Transverse colon (tissue), 4 donors: ENCODE measurements at regions of chr2 and their contacts with region 1.

Region 1: GRCh38 chr2:99066075-99066958 is 75.2 kb upstream of the C2orf15 start:
- DNase-seq: peak; percentile 38
- H3K4me3 ChIP-seq: peak overlapping the region in 1 of 4 donors; percentile 26
- H3K27ac ChIP-seq: peak overlapping the region; percentile 71 to 84 (median 78)
- H3K4me1 ChIP-seq: peaks cover 0 to 15% (median 7%) of the 10 kb centered on the region in 4 donors
- H3K27me3 ChIP-seq: no peaks in the 10 kb centered on the region
- CTCF ChIP-seq: peak; percentile 36 to 56 (median 45)
- EP300 ChIP-seq: no peak
- POLR2A ChIP-seq: peak; percentile 44

Region 2: DNA sequence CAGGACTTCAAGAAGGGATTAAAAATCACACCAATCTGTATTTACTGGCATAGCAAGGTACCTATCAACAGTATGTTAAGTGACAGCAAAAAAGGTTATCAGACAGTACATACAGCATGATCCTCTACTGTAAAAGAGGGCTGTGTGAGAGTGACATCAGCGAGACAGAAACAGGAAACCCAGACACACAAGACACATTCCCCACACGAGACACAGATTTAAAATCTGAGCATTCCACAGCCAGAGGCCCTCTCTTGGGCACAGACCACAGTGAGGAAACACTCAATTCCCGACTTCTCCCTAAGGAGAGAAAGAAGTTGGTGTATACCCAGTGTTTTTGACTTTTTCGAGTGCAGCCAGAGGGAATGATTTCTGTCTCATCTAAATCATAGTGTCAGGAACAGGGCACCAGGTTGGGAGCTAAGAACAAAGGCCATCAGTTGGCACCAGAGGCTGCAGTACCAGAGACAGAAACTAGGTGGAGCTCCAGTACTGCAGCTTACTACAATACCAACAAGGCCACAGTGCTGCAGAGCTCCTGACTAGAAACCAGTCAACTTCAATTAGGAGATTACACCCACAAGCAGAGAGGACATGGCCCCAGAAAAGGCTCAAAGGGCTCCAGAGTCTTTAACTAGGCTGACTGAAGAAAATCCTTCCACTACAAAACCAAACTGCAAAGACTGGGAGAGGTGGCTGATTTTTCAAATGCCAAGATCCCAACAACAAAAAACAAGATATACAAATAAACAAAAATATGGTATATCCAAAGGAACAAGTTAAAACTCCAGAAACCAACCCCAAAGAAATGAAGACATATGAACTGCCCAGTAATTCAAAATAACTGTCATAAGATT is 417.0 kb before region 1 on chr2:
- in situ Hi-C with region 1: loop called in 3 of 4 experiments (anchors 10 to 25 kb)
- intact Hi-C with region 1: no loop called
- DNase-seq: peak; percentile 87
- H3K4me3 ChIP-seq: no peak overlapping the region
- H3K27ac ChIP-seq: peak overlapping the region in 3 of 4 donors; percentile 16 to 75 (median 52)
- H3K4me1 ChIP-seq: peaks cover 0 to 40% (median 15%) of the 10 kb centered on the region in 4 donors
- H3K27me3 ChIP-seq: no peaks in the 10 kb centered on the region
- CTCF ChIP-seq: peak; percentile 96 to 99 (median 98)
- EP300 ChIP-seq: no peak
- POLR2A ChIP-seq: no peak

Region 3: DNA sequence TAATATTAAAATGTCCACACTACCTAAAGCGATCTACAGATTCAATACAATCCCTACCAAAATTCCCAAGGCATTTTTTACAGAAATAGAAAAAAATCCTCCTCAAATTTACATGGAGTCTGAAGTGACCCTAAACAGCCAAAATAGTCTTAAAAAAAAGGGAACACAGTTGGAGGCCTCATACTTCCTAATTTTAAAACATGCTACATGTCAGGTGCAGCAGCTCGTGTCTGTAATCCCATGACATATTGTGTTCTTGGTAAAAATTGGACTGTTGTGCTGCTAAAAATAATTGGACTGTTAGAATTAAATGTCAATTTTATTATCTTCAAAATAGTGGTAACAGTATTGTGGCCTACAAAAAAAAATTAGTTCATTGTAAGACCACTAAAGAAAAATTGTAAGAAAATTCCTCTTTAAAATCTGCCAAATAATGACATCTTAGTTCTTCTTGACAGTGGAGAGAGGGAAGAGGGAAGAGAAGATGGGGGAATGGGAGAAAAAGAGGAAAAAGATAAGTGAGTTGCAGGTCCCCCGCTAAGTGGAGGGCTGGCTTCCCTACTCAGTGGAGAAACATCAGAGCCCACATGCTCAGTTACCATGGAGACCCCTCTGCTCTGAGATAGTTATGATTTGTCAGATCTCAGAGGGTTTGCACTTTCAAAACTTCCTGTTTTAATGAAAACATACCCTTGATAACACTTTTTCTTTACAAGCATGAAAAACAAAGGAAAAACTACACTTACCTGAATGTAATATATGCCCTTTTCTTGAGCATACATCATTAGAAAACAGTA is 411.4 kb before region 1 on chr2:
- in situ Hi-C with region 1: loop called in 2 of 4 experiments (anchors 10 to 25 kb)
- intact Hi-C with region 1: no loop called
- DNase-seq: no peak
- H3K4me3 ChIP-seq: no peak overlapping the region
- H3K27ac ChIP-seq: peak overlapping the region in 3 of 4 donors; percentile 4 to 36 (median 26)
- H3K4me1 ChIP-seq: peaks cover 0 to 34% (median 10%) of the 10 kb centered on the region in 4 donors
- H3K27me3 ChIP-seq: no peaks in the 10 kb centered on the region
- CTCF ChIP-seq: no peak
- EP300 ChIP-seq: no peak
- POLR2A ChIP-seq: no peak

Region 4: DNA sequence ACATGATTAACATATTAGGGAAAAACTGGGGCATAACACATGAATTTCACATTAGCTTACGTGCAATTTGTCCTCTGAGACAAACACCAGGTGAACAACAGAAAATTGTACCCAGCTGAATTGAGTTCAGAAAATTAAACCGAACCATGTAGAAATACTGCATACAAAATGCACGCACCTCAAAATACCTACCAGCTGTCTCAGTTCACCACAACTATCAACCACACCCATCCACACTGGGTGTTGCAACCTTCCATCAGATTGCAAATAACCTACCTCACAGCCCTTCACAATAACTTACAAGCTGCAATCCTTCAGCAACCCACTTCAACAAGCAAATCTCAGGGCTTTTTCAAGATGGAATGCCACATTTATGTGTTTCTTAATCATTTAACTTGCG is 402.0 kb before region 1 on chr2:
- in situ Hi-C with region 1: loop called in 2 of 4 experiments (anchors 10 to 25 kb)
- intact Hi-C with region 1: no loop called
- DNase-seq: no peak
- H3K4me3 ChIP-seq: no peak overlapping the region
- H3K27ac ChIP-seq: peak overlapping the region in 1 of 4 donors; percentile 19
- H3K4me1 ChIP-seq: peaks cover 0 to 6% (median 4%) of the 10 kb centered on the region in 4 donors
- H3K27me3 ChIP-seq: no peaks in the 10 kb centered on the region
- CTCF ChIP-seq: no peak
- EP300 ChIP-seq: no peak
- POLR2A ChIP-seq: no peak

Region 5: GRCh38 chr2:99032786-99033185 is 33.5 kb before region 1 on chr2:
- in situ Hi-C with region 1: no loop called
- intact Hi-C with region 1: no loop called
- DNase-seq: no peak
- H3K4me3 ChIP-seq: no peak overlapping the region
- H3K27ac ChIP-seq: no peak overlapping the region
- H3K4me1 ChIP-seq: no peaks in the 10 kb centered on the region
- H3K27me3 ChIP-seq: no peaks in the 10 kb centered on the region
- CTCF ChIP-seq: no peak
- EP300 ChIP-seq: no peak
- POLR2A ChIP-seq: no peak

Region 6: GRCh38 chr2:99106913-99107312 is 40.6 kb after region 1 on chr2:
- in situ Hi-C with region 1: no loop called
- intact Hi-C with region 1: no loop called
- DNase-seq: no peak
- H3K4me3 ChIP-seq: no peak overlapping the region
- H3K27ac ChIP-seq: no peak overlapping the region
- H3K4me1 ChIP-seq: no peaks in the 10 kb centered on the region
- H3K27me3 ChIP-seq: no peaks in the 10 kb centered on the region
- CTCF ChIP-seq: no peak
- EP300 ChIP-seq: no peak
- POLR2A ChIP-seq: no peak